MCF 10A (cell line): ENCODE measurements at regions of chr1 and their contacts with region 1.

Region 1: DNA sequence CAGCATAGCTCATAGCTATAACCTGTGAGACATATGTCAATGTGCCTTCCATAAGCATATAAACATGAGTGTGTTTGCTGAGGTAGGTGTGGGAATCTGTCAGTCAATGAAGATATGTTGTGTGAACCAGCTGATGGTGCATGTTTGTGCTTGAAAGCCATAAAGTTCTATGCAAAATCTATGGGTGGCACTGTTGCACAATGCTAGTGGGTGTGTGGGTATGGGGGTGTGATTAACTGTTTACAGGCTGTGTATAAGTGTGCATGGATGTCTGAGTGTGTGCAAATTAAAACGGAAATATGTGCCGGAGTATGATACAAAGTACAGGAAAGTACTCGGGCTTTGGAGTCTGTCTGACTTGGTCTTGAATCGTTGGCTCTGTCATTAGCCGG is 1.0 kb upstream of the ATP2B4 start:
- DNase-seq: peak; percentile 96
- H3K4me3 Mint-ChIP-seq: peak overlapping the region; percentile 75
- H3K27ac Mint-ChIP-seq: peak overlapping the region; percentile 91
- H3K4me1 Mint-ChIP-seq: peaks cover 53% of the 10 kb centered on the region
- H3K27me3 Mint-ChIP-seq: no peaks in the 10 kb centered on the region
- CTCF ChIP-seq: peak; percentile 28

Region 2: DNA sequence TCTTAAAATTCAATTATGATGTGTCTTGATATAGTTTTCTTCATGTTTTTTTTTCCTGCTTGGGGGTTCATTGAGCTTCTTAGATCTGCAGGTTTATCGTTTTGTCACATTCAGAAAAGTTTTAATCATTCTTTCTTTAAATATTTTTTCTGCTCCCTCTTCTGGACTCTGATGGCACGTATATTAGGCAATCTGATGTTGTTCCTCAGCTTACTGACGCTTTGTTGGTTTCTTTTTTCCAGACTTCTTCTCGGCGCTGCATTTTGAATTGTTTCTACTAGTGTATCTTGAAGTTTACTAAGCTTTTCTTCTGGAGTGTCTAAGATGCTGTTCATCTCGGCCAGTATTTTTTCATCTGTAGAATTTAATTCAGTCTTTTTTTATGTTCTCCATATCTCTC is 229.9 kb before region 1 on chr1:
- CTCF ChIA-PET with region 1: no interaction called
- POLR2A ChIA-PET with region 1: no interaction called
- intact Hi-C with region 1: no loop called
- DNase-seq: no peak
- H3K4me3 Mint-ChIP-seq: no peak overlapping the region
- H3K27ac Mint-ChIP-seq: no peak overlapping the region
- H3K4me1 Mint-ChIP-seq: no peaks in the 10 kb centered on the region
- H3K27me3 Mint-ChIP-seq: peaks cover 57% of the 10 kb centered on the region
- CTCF ChIP-seq: no peak

Region 3: GRCh38 chr1:203512830-203513611 is 112.6 kb before region 1 on chr1:
- CTCF ChIA-PET with region 1: interaction called, 55 read pairs
- POLR2A ChIA-PET with region 1: interaction called, 27 read pairs
- intact Hi-C with region 1: loop called (anchors 2 kb)
- DNase-seq: peak; percentile 96
- H3K4me3 Mint-ChIP-seq: peak overlapping the region; percentile 47
- H3K27ac Mint-ChIP-seq: peak overlapping the region; percentile 93
- H3K4me1 Mint-ChIP-seq: peaks cover 45% of the 10 kb centered on the region
- H3K27me3 Mint-ChIP-seq: no peaks in the 10 kb centered on the region
- CTCF ChIP-seq: no peak

Region 4: GRCh38 chr1:203558064-203558760 is 67.4 kb before region 1 on chr1:
- CTCF ChIA-PET with region 1: interaction called, 8 read pairs
- POLR2A ChIA-PET with region 1: interaction called, 34 read pairs
- intact Hi-C with region 1: loop called (anchors 1 kb)
- DNase-seq: peak; percentile 99
- H3K4me3 Mint-ChIP-seq: no peak overlapping the region
- H3K27ac Mint-ChIP-seq: peak overlapping the region; percentile 44
- H3K4me1 Mint-ChIP-seq: peaks cover 27% of the 10 kb centered on the region
- H3K27me3 Mint-ChIP-seq: no peaks in the 10 kb centered on the region
- CTCF ChIP-seq: no peak

Region 5: GRCh38 chr1:203638950-203639349 is 13.3 kb after region 1 on chr1:
- CTCF ChIA-PET with region 1: interaction called, 11 read pairs
- POLR2A ChIA-PET with region 1: interaction called, 41 read pairs
- intact Hi-C with region 1: no loop called
- DNase-seq: no peak
- H3K4me3 Mint-ChIP-seq: no peak overlapping the region
- H3K27ac Mint-ChIP-seq: no peak overlapping the region
- H3K4me1 Mint-ChIP-seq: peaks cover 38% of the 10 kb centered on the region
- H3K27me3 Mint-ChIP-seq: no peaks in the 10 kb centered on the region
- CTCF ChIP-seq: no peak

Region 6: GRCh38 chr1:203692565-203693470 is 67.2 kb after region 1 on chr1:
- CTCF ChIA-PET with region 1: interaction called, 82 read pairs
- POLR2A ChIA-PET with region 1: interaction called, 172 read pairs
- intact Hi-C with region 1: loop called (anchors 1 kb)
- DNase-seq: peak; percentile 99
- H3K4me3 Mint-ChIP-seq: peak overlapping the region; percentile 61
- H3K27ac Mint-ChIP-seq: peak overlapping the region; percentile 96
- H3K4me1 Mint-ChIP-seq: peaks cover 37% of the 10 kb centered on the region
- H3K27me3 Mint-ChIP-seq: no peaks in the 10 kb centered on the region
- CTCF ChIP-seq: no peak

Region 7: DNA sequence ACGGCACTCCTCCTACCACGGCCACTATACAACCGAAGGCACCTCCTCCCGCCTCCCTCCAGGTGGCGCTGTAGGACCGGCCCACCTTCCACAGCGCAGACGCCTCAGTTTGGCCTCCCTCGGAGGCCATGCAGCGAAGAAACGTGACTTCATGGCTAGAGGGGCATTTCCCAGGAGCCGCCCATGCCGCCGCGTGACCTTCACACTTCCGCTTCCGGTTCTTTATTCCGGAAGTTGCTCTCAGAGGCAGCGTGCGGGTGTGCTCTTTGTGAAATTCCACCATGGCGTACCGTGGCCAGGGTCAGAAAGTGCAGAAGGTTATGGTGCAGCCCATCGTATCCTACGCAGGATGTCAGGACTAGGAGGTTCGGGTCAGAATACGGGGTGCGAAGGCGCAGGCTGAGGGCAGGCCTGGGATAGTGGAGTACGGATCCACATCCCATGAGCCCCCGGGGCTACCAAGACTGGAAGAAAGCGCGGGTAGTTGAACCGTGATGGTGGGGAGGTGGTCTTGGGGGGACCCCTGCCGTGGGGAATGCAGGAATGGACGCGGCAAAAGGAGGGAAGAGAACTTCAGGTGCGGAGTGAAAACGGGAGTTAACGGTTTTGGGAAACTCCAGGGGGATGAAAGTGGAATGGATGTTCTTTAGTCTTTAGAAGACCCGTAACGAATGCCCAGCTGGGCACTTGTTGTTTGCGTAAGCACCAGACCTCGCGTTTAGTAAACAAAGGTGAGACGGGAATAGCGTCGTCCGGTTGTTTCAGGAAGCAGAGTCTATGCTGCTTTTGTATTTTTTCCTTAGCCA is 236.0 kb after region 1 on chr1 and contains the start of gene SNRPE:
- CTCF ChIA-PET with region 1: interaction called, 6 read pairs
- POLR2A ChIA-PET with region 1: interaction called, 9 read pairs
- intact Hi-C with region 1: loop called (anchors 2 kb)
- DNase-seq: peak; percentile 100
- H3K4me3 Mint-ChIP-seq: peak within 1 kb of the TSS; percentile 100
- H3K27ac Mint-ChIP-seq: peak within 1 kb of the TSS; percentile 100
- H3K4me1 Mint-ChIP-seq: peaks cover 43% of the 10 kb centered on the region
- H3K27me3 Mint-ChIP-seq: no peaks in the 10 kb centered on the region
- CTCF ChIP-seq: peak; percentile 100
- total RNA-seq, gene SNRPE: 358 and 423 TPM in 2 replicates